ENCODE measurements at regions of chr4 and their contacts with region 1.

Region 1: DNA sequence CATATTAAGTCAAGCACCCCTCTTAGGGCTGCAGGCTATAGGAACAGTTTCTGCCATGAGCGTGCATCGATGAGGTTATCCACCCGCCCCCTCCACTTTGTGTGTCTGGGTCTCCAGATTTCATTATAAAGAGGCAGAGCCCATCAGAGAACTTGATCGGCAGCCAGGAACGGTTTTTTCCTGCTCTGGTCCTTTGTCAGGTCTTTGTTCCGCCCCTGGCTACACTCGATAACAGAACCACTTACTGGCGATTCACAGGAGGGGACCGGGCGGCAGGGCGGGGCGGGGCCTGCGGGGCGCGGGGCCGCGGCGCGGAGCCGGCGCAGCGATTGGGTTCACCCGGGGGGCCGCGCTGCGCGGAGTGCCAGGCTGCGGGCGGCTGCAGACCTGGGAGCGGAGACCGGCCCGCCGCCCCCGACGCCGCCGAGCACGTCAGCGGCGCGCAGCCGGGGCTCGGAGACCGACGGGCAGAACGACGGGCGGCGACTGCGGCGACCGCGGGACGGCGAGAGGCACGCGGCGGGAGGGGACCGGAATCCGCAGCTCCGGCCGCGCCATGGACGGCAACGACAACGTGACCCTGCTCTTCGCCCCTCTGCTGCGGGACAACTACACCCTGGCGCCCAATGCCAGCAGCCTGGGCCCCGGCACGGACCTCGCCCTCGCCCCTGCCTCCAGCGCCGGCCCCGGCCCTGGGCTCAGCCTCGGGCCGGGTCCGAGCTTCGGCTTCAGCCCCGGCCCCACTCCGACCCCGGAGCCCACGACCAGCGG is at the start of gene SLC10A4:
- DNase-seq: peak in 1 of 2 donors; percentile 14
- ATAC-seq: peak in 2 of 3 donors; percentile 72 to 74
- H3K4me3 ChIP-seq: no peak within 1 kb of the TSS
- H3K4me3 Mint-ChIP-seq: peak within 1 kb of the TSS; percentile 81
- H3K27ac ChIP-seq: no peak within 1 kb of the TSS
- H3K27ac Mint-ChIP-seq: no peak within 1 kb of the TSS
- H3K4me1 ChIP-seq: peaks cover 11% of the 10 kb centered on the region
- H3K4me1 Mint-ChIP-seq: peaks cover 13 to 14% of the 10 kb centered on the region in 2 donors
- H3K27me3 ChIP-seq: peaks cover 46% of the 10 kb centered on the region
- H3K27me3 Mint-ChIP-seq: peaks cover 57 to 67% of the 10 kb centered on the region in 2 donors
- CTCF ChIP-seq: no peak
- total RNA-seq, gene SLC10A4: 0.19 TPM in 1 of 3 donors, not detected in the others

Region 2: DNA sequence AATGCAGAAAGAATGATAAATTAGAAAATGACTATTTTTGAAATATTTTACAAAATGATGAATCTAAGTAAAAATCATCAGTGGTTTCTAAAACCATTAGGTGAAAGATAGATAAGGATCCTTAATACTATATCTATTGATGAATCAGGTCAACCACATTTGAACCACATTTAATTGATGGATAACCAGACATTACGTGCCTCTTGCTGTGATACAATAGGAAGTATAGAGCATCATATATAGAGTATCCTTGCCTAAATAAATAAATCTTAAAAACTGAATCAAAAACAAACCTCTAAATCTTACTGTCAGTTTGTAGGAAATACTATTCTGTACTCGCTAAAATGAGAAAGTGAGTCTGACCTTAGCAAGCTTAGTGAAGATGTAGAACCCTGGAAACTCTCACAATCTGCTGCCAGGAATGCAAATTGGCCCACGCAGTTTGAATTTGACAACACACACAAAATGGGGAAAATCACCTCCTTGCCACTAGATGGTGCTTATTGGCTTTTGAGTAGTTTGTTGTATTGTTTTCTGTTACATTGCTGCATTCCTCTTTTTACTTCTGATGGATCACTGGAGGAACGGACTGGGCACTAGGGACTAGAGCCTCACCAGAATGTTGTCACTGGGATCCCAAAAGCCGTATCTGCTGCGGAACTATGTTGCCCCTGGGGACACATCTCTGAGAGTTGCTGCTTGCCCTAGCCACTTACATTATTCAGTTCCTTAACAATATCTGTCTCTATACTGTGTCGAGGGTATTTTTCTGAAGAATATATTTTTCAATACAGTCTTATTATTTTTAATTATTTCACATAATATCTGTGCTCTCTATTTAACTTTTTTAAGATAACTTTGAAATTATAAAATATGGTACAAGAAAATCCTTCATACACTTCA is 167.2 kb before region 1 on chr4:
- intact Hi-C with region 1: loop called (anchors 5 kb)
- DNase-seq: peak in 1 of 2 donors; percentile 70
- ATAC-seq: peak in 2 of 3 donors; percentile 48 to 52
- H3K4me3 ChIP-seq: no peak overlapping the region
- H3K4me3 Mint-ChIP-seq: no peak overlapping the region
- H3K27ac ChIP-seq: no peak overlapping the region
- H3K27ac Mint-ChIP-seq: no peak overlapping the region
- H3K4me1 ChIP-seq: no peaks in the 10 kb centered on the region
- H3K4me1 Mint-ChIP-seq: no peaks in the 10 kb centered on the region
- H3K27me3 ChIP-seq: no peaks in the 10 kb centered on the region
- H3K27me3 Mint-ChIP-seq: no peaks in the 10 kb centered on the region
- CTCF ChIP-seq: peak; percentile 61

Measured in natural killer cell (primary cell).